PC-9 (cell line): ENCODE measurements at regions of chr6 and their contacts with region 1.

Region 1: GRCh38 chr6:34161857-34162515 is 16.1 kb upstream of the GRM4 start:
- DNase-seq: no peak
- H3K4me3 ChIP-seq: no peak overlapping the region
- H3K27ac ChIP-seq: no peak overlapping the region
- H3K4me1 ChIP-seq: no peaks in the 10 kb centered on the region; the same call in 1 of the 2 replicates
- H3K27me3 ChIP-seq: no peaks in the 10 kb centered on the region; the same call in 1 of the 2 replicates
- CTCF ChIP-seq: no peak

Region 2: GRCh38 chr6:34189806-34190503 is 28.0 kb after region 1 on chr6:
- CTCF ChIA-PET with region 1: interaction called, 14 read pairs
- POLR2A ChIA-PET with region 1: no interaction called
- intact Hi-C with region 1: no loop called
- DNase-seq: no peak
- H3K4me3 ChIP-seq: no peak overlapping the region
- H3K27ac ChIP-seq: no peak overlapping the region
- H3K4me1 ChIP-seq: no peaks in the 10 kb centered on the region
- H3K27me3 ChIP-seq: no peaks in the 10 kb centered on the region
- CTCF ChIP-seq: no peak

Region 3: DNA sequence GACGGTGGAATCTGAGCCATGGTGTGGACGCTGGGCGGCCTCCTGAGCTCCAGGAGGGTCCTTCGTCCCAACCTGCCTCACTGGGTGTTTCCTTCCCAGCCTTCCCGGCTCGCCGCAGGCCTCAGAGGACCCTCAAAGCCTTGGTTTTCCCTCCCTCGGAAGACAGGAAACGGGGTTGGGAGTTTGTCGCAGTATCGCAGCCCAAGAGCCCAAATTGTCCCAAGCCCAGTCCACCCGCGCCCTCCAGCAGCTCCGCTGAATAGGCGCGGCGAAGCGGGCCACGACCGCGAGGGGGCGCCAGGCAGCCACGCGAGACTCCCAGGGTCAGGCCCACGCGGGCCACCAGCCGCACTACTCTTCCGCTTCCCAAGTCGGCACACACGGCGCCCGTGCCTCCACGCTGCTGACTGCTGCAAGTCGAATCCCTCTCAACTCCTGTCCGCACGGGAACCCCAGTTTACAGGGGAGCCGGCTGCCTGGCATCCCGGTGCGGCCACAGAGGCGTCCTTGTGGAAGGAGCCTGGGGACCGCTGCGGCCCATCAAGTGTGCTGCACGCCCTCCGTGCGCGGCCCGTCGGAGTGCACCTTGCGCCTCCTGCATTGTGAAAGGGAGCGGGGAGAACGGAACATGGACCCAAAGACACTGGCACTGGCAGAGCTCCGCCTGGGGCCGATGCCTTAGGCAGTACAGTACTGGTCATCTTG is 34.3 kb after region 1 on chr6:
- CTCF ChIA-PET with region 1: no interaction called
- POLR2A ChIA-PET with region 1: no interaction called
- intact Hi-C with region 1: loop called (anchors 2 kb)
- DNase-seq: peak; percentile 38 to 82
- H3K4me3 ChIP-seq: peak overlapping the region; percentile 55
- H3K27ac ChIP-seq: no peak overlapping the region
- H3K4me1 ChIP-seq: peaks cover 11% of the 10 kb centered on the region
- H3K27me3 ChIP-seq: no peaks in the 10 kb centered on the region
- CTCF ChIP-seq: peak; percentile 94

Region 4: DNA sequence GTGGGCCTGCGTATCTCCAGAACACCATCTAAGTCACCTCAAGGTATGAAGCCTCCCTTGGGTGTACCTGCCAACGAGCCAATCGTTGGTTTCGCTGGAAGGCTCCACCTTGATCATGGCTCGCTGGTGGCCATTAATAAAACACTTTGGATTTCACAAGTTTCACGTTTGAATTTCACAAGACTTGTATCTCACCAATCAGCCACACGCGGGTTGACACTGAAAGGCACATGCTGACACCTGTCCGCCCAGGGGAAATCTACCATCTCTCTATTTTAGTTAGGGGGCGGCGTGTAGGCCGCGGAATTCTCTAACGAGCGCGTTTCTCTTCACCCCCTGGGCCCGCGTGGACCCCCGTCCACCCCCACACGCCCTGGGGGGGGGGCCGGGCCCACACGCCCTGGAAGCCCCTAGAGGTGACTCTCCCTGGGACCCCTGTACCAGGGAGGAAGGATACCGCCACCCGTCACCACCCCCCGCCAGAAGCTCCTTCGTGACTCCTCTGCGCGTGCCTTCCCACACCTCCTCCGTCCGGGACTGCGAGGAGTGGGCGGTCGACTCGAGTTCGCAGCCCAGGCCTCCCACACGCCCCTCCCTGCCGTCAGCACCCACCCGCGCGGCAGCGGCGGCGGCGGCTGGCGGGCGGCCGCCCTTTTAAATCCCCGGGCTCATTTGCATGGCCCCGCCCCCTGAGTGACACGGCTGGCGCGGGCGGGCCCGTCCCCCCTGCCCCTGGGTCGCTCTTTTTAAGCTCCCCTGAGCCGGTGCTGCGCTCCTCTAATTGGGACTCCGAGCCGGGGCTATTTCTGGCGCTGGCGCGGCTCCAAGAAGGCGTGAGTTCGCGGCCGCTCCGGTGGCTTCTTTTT is 74.4 kb after region 1 on chr6 and contains the start of gene HMGA1:
- CTCF ChIA-PET with region 1: no interaction called
- POLR2A ChIA-PET with region 1: interaction called, 11 read pairs
- intact Hi-C with region 1: no loop called
- DNase-seq: peak; percentile 86
- H3K4me3 ChIP-seq: peak within 1 kb of the TSS; percentile 94
- H3K27ac ChIP-seq: peak within 1 kb of the TSS; percentile 97
- H3K4me1 ChIP-seq: peaks cover 52% of the 10 kb centered on the region
- H3K27me3 ChIP-seq: no peaks in the 10 kb centered on the region
- CTCF ChIP-seq: peak; percentile 6; the same call in 1 of the 2 replicates
- total RNA-seq, gene HMGA1: 1,825 and 1,951 TPM in 2 replicates

Region 5: GRCh38 chr6:34414999-34415858 is 253.2 kb after region 1 on chr6:
- CTCF ChIA-PET with region 1: interaction called, 13 read pairs
- POLR2A ChIA-PET with region 1: no interaction called
- intact Hi-C with region 1: loop called (anchors 2 kb)
- DNase-seq: peak in 1 of 2 experiments; percentile 60
- H3K4me3 ChIP-seq: no peak overlapping the region
- H3K27ac ChIP-seq: no peak overlapping the region
- H3K4me1 ChIP-seq: no peaks in the 10 kb centered on the region
- H3K27me3 ChIP-seq: no peaks in the 10 kb centered on the region
- CTCF ChIP-seq: peak; percentile 54

Region 6: DNA sequence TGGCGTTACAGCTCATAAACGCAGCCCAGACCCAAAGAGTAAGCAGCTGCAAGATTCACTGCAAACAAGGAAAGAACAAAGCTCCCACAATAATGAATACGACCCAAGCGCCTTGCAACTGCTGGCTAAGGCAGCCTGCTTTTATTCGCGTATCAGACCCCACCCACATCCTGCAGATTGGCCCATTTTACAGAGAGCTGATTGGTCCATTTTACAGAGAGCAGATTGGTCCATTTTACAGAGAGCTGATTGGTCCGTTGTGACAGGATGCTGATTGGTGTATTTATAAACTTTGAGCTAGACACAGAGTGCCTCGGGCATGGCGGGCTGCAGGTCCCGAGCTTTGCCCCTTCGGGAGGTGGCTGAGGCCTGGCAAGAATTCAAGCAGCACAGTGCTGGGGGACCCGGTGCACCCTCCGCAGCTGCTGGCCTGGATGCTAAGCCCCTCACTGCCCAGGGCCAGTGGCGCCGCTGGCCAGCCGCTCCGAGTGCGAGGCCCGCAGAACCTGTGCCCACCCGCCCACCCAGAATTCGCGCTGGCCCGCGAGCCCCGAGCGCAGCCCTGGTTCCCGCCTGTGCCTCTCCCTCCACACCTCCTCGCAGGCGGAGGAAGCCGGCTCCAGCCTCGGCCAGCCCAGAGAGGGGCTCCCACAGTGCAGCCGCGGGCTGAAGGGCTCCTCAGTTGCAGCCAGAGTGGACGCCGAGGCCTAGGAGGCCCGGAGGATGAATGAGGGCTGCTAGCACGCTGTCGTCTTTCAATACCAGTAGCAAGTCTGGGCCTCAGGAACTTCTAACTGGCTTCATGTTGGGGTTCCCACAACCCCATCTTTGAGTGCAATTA is 275.0 kb after region 1 on chr6:
- CTCF ChIA-PET with region 1: interaction called, 10 read pairs
- POLR2A ChIA-PET with region 1: no interaction called
- intact Hi-C with region 1: no loop called
- DNase-seq: no peak
- H3K4me3 ChIP-seq: no peak overlapping the region
- H3K27ac ChIP-seq: no peak overlapping the region
- H3K4me1 ChIP-seq: peaks cover 9% of the 10 kb centered on the region; the same call in 1 of the 2 replicates
- H3K27me3 ChIP-seq: no peaks in the 10 kb centered on the region
- CTCF ChIP-seq: no peak